HepG2 (cell line): ENCODE measurements at regions of chr18 and their contacts with region 1.

Region 1: GRCh38 chr18:23812546-23813440 is 123.5 kb downstream of the LAMA3 start:
- DNase-seq: no peak
- ATAC-seq: no peak
- H3K4me3 ChIP-seq: no peak overlapping the region
- H3K27ac ChIP-seq: no peak overlapping the region
- H3K4me1 ChIP-seq: no peaks in the 10 kb centered on the region
- H3K27me3 ChIP-seq: peaks cover 0 to 5% of the 10 kb centered on the region in 2 experiments; a peak in 3 of 5 replicates
- CTCF ChIP-seq: peak; percentile 35; the same call in 1 of the 2 replicates
- EP300 ChIP-seq: no peak
- POLR2A ChIP-seq: no peak
- RAD21 ChIP-seq: no peak

Region 2: GRCh38 chr18:23498877-23499276 is 313.9 kb before region 1 on chr18:
- CTCF ChIA-PET with region 1: interaction called, 6 read pairs
- POLR2A ChIA-PET with region 1: no interaction called
- in situ Hi-C with region 1: no loop called
- intact Hi-C with region 1: loop called (anchors 5 kb)
- DNase-seq: peak; percentile 62
- ATAC-seq: peak; percentile 49
- H3K4me3 ChIP-seq: no peak overlapping the region
- H3K27ac ChIP-seq: no peak overlapping the region
- H3K4me1 ChIP-seq: peaks cover 24% of the 10 kb centered on the region
- H3K27me3 ChIP-seq: no peaks in the 10 kb centered on the region
- CTCF ChIP-seq: peak; percentile 88
- EP300 ChIP-seq: no peak
- POLR2A ChIP-seq: no peak
- RAD21 ChIP-seq: no peak; the same call in 1 of the 2 replicates

Region 3: GRCh38 chr18:23619388-23619881 is 193.4 kb before region 1 on chr18:
- CTCF ChIA-PET with region 1: interaction called, 4 read pairs
- POLR2A ChIA-PET with region 1: no interaction called
- in situ Hi-C with region 1: loop called (anchors 5 kb)
- intact Hi-C with region 1: loop called (anchors 1 kb)
- DNase-seq: no peak
- ATAC-seq: peak; percentile 48
- H3K4me3 ChIP-seq: peak overlapping the region; percentile 30 to 69 (median 31); a peak in 5 of 6 replicates
- H3K27ac ChIP-seq: no peak overlapping the region
- H3K4me1 ChIP-seq: peaks cover 28% of the 10 kb centered on the region
- H3K27me3 ChIP-seq: peaks cover 1 to 31% of the 10 kb centered on the region in 2 experiments; a peak in 3 of 5 replicates
- CTCF ChIP-seq: no peak
- EP300 ChIP-seq: no peak
- POLR2A ChIP-seq: no peak
- RAD21 ChIP-seq: no peak

Region 4: DNA sequence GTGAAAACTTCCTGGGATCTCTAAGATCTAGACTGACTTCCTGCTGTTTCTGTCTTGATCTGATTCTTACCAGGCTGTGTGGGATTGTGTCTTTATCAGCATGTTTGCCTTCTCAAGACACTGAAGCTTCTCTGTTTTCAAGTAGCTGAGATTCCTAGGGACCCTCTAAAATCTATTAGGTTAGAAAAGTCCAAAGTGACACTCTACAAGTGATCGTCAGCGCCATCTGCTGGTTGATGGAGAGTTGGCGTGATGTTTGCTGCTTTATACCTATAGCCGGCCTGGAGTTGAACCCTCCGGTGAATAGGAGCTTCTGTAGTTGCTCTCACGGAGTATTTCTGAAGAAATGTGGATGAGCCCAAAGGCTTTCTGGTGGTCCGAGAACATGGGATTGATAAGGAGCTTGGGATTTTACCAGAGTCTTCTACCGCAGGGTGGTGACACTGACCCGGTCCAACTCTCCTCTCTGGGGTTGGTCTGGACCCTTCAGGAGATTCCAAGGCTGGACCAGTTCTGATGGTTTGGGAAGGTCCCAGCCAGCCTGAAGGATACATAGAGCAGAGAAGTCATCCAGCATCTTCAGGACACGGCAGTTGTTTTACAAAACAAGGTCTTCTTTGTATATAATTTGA is 105.7 kb after region 1 on chr18:
- CTCF ChIA-PET with region 1: no interaction called
- POLR2A ChIA-PET with region 1: no interaction called
- in situ Hi-C with region 1: no loop called
- intact Hi-C with region 1: loop called (anchors 1 kb)
- DNase-seq: peak; percentile 55
- ATAC-seq: peak; percentile 84
- H3K4me3 ChIP-seq: no peak overlapping the region
- H3K27ac ChIP-seq: no peak overlapping the region
- H3K4me1 ChIP-seq: no peaks in the 10 kb centered on the region
- H3K27me3 ChIP-seq: no peaks in the 10 kb centered on the region; a peak in 1 of 5 replicates
- CTCF ChIP-seq: peak; percentile 83
- EP300 ChIP-seq: no peak
- POLR2A ChIP-seq: no peak
- RAD21 ChIP-seq: peak; percentile 57; the same call in 1 of the 2 replicates

Region 5: DNA sequence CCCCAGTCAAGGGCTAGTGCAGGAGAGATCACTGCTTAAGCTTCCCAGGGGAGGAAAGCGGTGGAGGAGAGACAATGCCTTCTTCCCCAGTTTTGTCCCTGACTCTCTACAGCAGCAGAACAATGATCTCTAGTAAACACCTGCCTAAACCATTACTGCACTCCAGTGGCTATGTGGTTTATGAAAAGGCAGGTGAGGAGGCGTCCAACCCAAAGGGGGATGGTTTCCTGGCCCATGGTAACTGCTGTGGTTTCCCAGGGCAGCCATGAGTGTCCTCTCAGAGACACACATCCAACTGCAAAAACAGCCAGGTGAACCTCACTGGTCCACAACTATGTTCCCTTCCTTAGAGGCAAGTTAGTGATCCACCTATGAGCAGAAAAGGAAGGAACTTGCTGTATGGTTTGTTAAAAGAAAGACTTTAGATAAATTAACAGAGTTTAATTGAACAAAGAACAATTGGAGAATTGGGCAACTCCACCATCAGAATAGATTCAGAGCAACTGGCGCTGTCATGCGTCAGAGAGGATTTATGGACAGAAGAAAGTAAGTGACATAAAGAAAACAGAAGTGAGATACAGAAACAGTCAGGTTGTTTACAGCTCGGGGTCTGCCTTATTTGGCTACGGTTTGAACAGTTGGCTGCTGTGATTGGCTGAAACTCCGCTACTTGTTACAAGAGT is 197.0 kb after region 1 on chr18:
- CTCF ChIA-PET with region 1: no interaction called
- POLR2A ChIA-PET with region 1: no interaction called
- in situ Hi-C with region 1: no loop called
- intact Hi-C with region 1: no loop called
- DNase-seq: no peak
- ATAC-seq: no peak
- H3K4me3 ChIP-seq: no peak overlapping the region
- H3K27ac ChIP-seq: no peak overlapping the region
- H3K4me1 ChIP-seq: no peaks in the 10 kb centered on the region
- H3K27me3 ChIP-seq: peaks cover 0 to 36% of the 10 kb centered on the region in 2 experiments; a peak in 3 of 5 replicates
- CTCF ChIP-seq: no peak
- EP300 ChIP-seq: no peak
- POLR2A ChIP-seq: no peak
- RAD21 ChIP-seq: no peak

Region 6: DNA sequence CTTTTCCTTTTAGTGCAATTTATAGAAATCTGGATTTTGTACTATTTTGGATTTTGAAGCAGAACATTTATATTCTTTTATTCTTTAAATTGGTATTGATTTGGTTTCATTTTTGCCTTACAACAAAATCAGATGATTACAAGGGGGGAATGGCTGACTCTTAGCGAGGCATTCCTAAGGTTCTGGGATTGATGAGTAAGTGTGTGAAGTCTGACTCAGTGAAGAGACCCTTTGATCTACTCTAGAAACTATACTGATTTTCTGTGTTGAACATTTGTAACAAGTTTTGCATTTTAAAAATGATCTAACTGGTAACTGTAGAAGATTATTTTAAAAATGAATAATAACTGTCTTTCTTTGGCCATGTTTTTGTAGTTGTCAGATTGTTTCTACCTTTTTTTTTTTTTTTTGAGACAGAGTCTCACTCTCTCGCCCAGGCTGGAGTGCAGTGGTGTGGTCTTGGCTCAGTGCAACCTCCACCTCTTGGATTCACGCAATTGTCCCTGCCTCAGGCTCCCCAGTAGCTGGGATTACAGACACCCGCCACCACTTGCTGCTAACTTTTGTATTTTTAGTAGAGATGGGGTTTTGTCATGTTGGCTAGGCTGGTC is 250.4 kb after region 1 on chr18:
- CTCF ChIA-PET with region 1: no interaction called
- POLR2A ChIA-PET with region 1: no interaction called
- in situ Hi-C with region 1: no loop called
- intact Hi-C with region 1: no loop called
- DNase-seq: peak; percentile 21
- ATAC-seq: peak; percentile 71
- H3K4me3 ChIP-seq: no peak overlapping the region
- H3K27ac ChIP-seq: peak overlapping the region; percentile 54
- H3K4me1 ChIP-seq: peaks cover 54% of the 10 kb centered on the region
- H3K27me3 ChIP-seq: no peaks in the 10 kb centered on the region
- CTCF ChIP-seq: no peak
- EP300 ChIP-seq: no peak
- POLR2A ChIP-seq: no peak
- RAD21 ChIP-seq: no peak